ENCODE measurements at regions of chr1 and their contacts with region 1.

Region 1: DNA sequence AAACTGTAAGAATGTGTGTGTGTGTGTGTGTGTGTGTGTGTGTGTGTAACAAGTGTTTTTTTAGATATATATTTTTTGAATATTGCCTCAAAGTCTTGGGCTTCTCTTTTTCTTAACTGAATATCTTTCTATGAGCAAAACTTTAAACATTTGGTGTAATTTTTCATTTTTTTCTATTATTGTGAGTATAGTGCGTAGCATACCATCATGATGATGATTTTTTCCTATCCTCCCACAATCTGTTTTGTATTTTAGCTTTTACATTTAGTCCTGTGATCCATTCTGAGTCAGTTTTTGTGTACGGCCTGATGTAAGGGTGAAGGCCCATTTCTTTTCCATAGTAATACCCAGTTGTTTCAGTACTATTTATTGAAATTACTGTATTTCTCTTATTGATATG is 680.6 kb downstream of the TTLL7 start:
- DNase-seq: no peak
- H3K4me3 Mint-ChIP-seq: no peak overlapping the region
- H3K27ac Mint-ChIP-seq: no peak overlapping the region
- H3K4me1 Mint-ChIP-seq: no peaks in the 10 kb centered on the region
- H3K27me3 Mint-ChIP-seq: no peaks in the 10 kb centered on the region

Region 2: GRCh38 chr1:83090195-83090594 is 228.2 kb before region 1 on chr1:
- intact Hi-C with region 1: no loop called
- DNase-seq: no peak
- H3K4me3 Mint-ChIP-seq: no peak overlapping the region
- H3K27ac Mint-ChIP-seq: no peak overlapping the region
- H3K4me1 Mint-ChIP-seq: no peaks in the 10 kb centered on the region
- H3K27me3 Mint-ChIP-seq: no peaks in the 10 kb centered on the region

Region 3: DNA sequence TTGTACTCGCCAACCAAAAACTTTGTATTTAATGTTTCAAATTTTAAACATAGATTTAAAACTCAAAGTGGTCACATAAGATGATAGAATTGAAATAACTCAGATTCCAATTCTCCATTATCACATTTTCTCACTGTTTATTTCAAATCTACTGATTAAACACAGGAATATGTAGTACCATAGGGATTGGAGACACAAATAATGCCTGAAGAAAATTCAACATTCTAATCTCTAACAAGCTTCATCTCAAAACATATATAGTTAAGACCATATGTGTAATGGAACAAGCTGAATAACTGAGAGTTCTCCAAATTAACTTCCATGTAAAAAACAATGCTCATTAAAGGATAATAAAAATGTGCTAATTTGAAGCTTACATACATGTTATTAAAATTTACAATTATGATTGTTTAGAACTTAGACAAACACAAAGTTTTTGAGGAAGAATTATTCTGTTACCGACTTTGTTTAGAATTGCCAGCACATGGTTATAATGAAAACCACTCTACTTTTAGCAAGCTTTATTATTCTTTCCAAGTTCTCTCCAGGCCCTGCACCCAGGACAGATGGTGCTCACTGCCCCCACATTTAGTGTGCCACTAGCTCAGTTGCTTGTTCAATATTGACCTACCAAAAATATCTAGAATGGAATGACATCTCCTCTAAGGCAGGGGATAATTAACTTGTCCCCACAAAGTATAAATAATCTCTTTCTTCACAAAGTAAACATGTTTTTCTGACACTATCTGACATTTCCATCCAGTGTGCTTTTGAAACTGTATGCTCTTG is 213.3 kb after region 1 on chr1:
- intact Hi-C with region 1: no loop called
- DNase-seq: no peak
- H3K4me3 Mint-ChIP-seq: no peak overlapping the region
- H3K27ac Mint-ChIP-seq: no peak overlapping the region
- H3K4me1 Mint-ChIP-seq: no peaks in the 10 kb centered on the region
- H3K27me3 Mint-ChIP-seq: no peaks in the 10 kb centered on the region

Region 4: DNA sequence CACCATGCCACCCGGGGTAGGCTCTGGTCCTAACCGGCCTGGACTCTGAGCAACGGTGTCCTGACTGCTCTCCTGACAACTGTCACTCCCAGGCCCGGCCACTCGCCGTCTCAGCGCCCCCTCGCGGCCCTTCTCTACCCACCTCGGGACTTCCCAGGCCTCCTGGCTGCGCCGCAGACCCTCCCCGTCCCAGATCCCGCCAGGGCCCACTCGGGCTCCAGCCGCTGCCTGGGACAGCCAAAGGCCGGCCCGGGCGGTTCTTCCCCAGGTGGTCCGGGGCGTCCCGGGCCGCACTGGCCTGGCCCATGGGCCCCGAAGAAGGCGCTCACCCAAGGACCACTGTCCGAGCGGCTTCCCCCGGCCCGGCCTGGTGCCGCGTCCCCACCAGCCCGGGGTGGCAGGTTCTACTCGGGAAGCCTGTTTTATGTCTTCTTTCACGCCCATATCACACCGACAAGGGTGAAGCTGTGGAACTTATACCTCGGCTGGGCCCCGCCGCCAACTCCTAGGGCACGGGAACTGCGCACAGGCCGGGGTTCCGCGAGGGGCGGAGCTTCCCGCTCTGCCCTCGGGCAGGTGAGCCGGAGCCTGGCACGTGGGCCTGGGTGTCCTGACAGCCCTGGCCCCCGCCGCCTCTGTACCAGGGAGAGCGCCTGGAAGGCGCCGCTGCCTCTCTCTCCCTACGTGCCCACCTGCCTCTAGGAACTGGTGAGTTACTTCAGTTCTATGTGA is 542.3 kb after region 1 on chr1:
- intact Hi-C with region 1: loop called (anchors 10 kb)
- DNase-seq: peak; percentile 92
- H3K4me3 Mint-ChIP-seq: peak overlapping the region; percentile 71
- H3K27ac Mint-ChIP-seq: peak overlapping the region; percentile 1
- H3K4me1 Mint-ChIP-seq: peaks cover 7% of the 10 kb centered on the region
- H3K27me3 Mint-ChIP-seq: peaks cover 7% of the 10 kb centered on the region

Measured in activated CD4-positive, alpha-beta T cell treated with anti-CD3 and anti-CD28 coated beads, Interleukin-2, amount 10 ng/mL, durations not matched to agents 24 days and 14 days (primary cell).